Mammary epithelial cell (primary cell): ENCODE measurements at regions of chr9 and their contacts with region 1.

Region 1: DNA sequence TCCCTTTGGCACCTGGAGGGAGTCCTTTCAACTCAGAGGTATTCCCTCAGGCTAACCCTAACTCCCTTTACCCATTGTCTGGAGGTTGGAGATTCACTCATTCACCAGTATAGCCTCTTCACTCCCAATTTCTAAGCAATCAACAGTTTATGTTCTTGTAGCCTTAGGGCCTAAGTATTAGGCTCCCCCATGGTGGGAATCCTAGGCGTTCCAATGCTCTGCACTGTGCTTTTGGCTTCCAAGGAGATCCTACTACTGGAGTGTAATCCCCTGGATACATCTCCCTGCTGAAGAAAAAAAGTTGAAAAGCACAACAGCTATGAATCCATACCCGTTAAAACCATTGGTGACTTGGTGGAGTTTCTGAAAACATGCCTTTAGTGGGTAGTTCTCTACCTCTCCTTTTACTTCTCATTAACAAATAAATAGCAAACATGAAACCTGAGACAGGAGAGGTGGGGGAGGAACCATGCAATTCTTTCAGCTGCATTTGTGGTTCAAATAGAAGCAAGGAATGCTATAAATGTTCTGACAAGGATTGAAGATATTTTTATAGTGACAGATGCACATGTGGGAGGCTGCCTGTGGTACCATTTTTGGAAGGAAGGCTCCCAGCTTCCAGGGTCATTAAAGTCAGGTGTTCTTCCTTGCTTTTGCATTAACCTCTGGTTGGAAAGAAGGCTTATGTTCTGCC is 397.1 kb downstream of the DMAC1 start:
- DNase-seq: peak; percentile 8
- H3K4me3 ChIP-seq: no peak overlapping the region
- H3K27ac ChIP-seq: no peak overlapping the region
- H3K4me1 ChIP-seq: peaks cover 9% of the 10 kb centered on the region
- H3K27me3 ChIP-seq: no peaks in the 10 kb centered on the region
- CTCF ChIP-seq: no peak

Region 2: GRCh38 chr9:7433508-7434292 is 31.2 kb after region 1 on chr9:
- CTCF ChIA-PET with region 1: no interaction called
- dilution Hi-C with region 1: no loop called
- in situ Hi-C with region 1: no loop called
- intact Hi-C with region 1: loop called (anchors 2 kb)
- DNase-seq: peak; percentile 85
- H3K4me3 ChIP-seq: no peak overlapping the region
- H3K27ac ChIP-seq: peak overlapping the region; percentile 56
- H3K4me1 ChIP-seq: peaks cover 21% of the 10 kb centered on the region
- H3K27me3 ChIP-seq: no peaks in the 10 kb centered on the region
- CTCF ChIP-seq: no peak

Region 3: DNA sequence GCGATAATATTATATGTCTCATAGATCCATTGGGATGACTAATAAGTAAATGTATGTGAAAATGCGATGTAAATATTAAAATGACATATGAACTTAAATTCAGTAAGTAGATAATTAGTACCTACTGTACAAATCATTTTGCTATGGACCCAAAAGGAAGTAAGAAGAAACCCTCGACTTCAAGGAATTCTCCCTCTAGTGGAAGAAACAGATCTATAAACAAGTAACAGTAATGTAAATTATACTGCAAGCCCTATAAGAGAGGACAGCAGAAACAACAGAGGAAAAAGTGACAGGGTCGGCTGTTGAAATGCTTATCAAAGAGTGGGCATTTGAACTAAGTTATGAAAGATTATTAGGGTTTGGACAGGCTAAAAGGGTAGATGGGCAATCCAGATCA is 76.8 kb after region 1 on chr9:
- CTCF ChIA-PET with region 1: no interaction called
- dilution Hi-C with region 1: no loop called
- in situ Hi-C with region 1: no loop called
- intact Hi-C with region 1: loop called (anchors 5 kb)
- DNase-seq: no peak
- H3K4me3 ChIP-seq: no peak overlapping the region
- H3K27ac ChIP-seq: no peak overlapping the region
- H3K4me1 ChIP-seq: no peaks in the 10 kb centered on the region
- H3K27me3 ChIP-seq: no peaks in the 10 kb centered on the region
- CTCF ChIP-seq: peak; percentile 13 to 18

Region 4: DNA sequence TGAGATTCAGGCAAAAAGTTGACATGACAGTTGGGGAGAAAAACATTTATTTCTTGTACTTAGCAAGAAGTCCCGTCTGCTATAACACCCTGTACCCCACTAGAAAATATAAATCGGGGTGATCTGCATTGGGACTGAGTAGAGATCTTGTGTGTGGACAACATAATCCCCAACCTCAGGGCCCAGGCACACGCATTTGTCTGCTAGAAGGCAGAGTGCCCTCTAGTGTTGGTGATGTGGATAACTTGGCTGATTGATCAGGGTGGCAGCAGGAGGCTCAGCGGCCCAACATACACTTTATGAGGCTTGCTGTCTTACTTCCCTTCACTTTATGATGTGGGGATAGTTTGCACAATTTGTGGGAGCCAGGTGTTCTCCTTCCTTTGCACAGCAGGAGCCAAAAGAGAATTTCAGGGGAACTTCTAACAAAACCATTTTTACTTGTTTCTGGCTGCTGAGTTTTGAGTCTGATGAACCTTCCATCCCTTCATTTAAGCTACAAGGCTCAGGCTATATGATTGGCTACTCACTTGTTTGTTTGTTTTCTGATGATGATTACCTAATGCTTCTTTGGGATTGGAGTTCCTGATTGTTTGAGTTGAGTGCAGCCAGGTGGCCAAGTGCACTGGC is 133.9 kb after region 1 on chr9:
- CTCF ChIA-PET with region 1: interaction called, 7 read pairs
- dilution Hi-C with region 1: no loop called
- in situ Hi-C with region 1: loop called (anchors 5 kb)
- intact Hi-C with region 1: loop called (anchors 1 kb)
- DNase-seq: peak; percentile 27
- H3K4me3 ChIP-seq: no peak overlapping the region
- H3K27ac ChIP-seq: no peak overlapping the region
- H3K4me1 ChIP-seq: no peaks in the 10 kb centered on the region
- H3K27me3 ChIP-seq: peaks cover 3% of the 10 kb centered on the region
- CTCF ChIP-seq: peak; percentile 86 to 88